ENCODE measurements at regions of chr10 and their contacts with region 1.

Region 1: DNA sequence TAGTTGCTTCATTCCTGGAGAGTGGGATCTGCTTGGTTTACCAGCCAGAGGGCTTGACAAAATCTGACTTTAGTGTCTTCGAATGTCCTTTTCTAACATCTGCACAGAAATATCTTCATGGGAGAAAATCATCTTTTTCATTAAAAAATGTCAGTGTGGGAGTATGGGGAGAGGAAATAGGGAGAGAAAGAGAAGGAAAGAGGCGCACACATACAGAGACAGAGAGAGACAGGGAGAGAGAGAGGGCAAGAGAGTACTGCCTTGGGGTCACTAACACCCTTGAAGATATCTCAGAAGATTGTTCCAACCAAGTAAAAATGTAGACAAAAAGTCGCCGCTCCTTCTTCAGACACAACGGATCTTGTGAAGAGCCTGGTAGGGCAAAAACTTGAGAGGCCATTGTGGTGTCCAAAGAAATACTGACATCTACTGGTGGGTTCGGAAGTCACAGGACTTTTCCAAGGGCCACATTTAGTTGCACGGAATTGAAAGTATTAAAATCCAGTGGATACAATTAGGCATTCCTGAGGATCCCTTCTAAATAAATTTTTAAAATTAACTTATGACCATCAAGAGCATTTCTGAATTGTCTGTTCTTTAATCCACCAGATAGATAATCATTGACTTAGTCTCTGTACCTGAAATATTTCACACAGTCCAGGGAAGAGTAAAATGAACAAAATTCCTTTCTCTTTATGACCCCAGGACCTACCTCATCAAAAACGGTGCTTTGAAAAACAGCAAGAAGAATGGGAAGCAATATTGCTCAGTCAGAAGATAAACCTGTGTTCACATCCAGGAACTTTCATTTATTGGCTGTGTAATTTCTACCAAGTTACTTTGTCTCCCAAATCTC is 29.7 kb downstream of the VIM start:
- DNase-seq: peak; percentile 47 to 74 (median 68)
- H3K4me3 ChIP-seq: no peak overlapping the region
- H3K27ac ChIP-seq: no peak overlapping the region
- H3K4me1 ChIP-seq: no peaks in the 10 kb centered on the region
- H3K27me3 ChIP-seq: peaks cover 8% of the 10 kb centered on the region
- CTCF ChIP-seq: peak; percentile 70 to 90 (median 88)
- POLR2A ChIP-seq: no peak

Region 2: DNA sequence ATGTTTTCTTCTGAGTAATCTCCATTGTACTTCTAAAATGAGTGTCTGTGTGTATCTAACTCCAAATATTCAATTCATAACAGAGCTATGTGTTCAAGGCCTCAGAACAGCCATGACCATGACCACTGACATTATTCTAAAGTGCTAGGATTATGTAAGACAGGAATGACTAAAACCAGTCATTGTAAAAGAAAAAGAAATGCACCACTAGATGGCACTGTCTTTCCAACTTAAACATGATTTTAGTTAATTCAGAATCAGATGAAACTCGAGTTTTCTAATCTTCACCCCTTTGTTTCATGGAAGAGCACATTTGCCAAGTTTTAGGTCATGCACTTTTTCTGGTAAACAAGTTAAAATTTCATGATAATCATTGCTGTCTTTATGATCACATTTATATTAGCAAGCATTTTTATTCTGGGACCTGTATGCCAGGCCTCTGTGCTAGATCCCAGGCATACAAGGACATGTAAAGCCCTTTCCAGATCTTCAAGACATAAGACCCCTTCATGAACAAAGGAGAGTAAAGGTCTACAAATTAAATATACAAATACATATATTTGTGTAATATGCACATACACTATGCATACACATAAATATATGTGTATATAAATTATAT is 414.3 kb before region 1 on chr10:
- intact Hi-C with region 1: loop called (anchors 2 to 5 kb)
- DNase-seq: peak in 3 of 7 donors; percentile 17 to 42 (median 24)
- H3K4me3 ChIP-seq: no peak overlapping the region
- H3K27ac ChIP-seq: peak overlapping the region in 1 of 5 donors; percentile 20
- H3K4me1 ChIP-seq: peaks cover 0 to 4% of the 10 kb centered on the region in 2 donors
- H3K27me3 ChIP-seq: no peaks in the 10 kb centered on the region
- CTCF ChIP-seq: peak; percentile 57 to 80 (median 72)
- POLR2A ChIP-seq: no peak

Region 3: GRCh38 chr10:17527516-17528146 is 269.9 kb after region 1 on chr10:
- intact Hi-C with region 1: no loop called
- DNase-seq: no peak
- H3K4me3 ChIP-seq: no peak overlapping the region
- H3K27ac ChIP-seq: no peak overlapping the region
- H3K4me1 ChIP-seq: no peaks in the 10 kb centered on the region
- H3K27me3 ChIP-seq: no peaks in the 10 kb centered on the region
- CTCF ChIP-seq: no peak
- POLR2A ChIP-seq: no peak

Measured in adrenal gland (tissue), 19 donors.